ENCODE measurements at regions of chr7 and their contacts with region 1.

Region 1: GRCh38 chr7:130904031-130904757 is 170.2 kb upstream of the KLF14 start:
- DNase-seq: peak; percentile 96
- H3K4me3 Mint-ChIP-seq: peak overlapping the region; percentile 59
- H3K27ac Mint-ChIP-seq: peak overlapping the region; percentile 97
- H3K4me1 Mint-ChIP-seq: peaks cover 66% of the 10 kb centered on the region
- H3K27me3 Mint-ChIP-seq: no peaks in the 10 kb centered on the region
- CTCF ChIP-seq: no peak

Region 2: GRCh38 chr7:130853503-130854279 is 50.5 kb before region 1 on chr7:
- CTCF ChIA-PET with region 1: interaction called, 4 read pairs
- POLR2A ChIA-PET with region 1: interaction called, 12 read pairs
- intact Hi-C with region 1: no loop called
- DNase-seq: peak; percentile 84
- H3K4me3 Mint-ChIP-seq: peak overlapping the region; percentile 29
- H3K27ac Mint-ChIP-seq: peak overlapping the region; percentile 24
- H3K4me1 Mint-ChIP-seq: peaks cover 31% of the 10 kb centered on the region
- H3K27me3 Mint-ChIP-seq: no peaks in the 10 kb centered on the region
- CTCF ChIP-seq: no peak

Region 3: GRCh38 chr7:130929896-130930659 is 25.9 kb after region 1 on chr7:
- CTCF ChIA-PET with region 1: interaction called, 123 read pairs
- POLR2A ChIA-PET with region 1: interaction called, 11 read pairs
- intact Hi-C with region 1: no loop called
- DNase-seq: no peak
- H3K4me3 Mint-ChIP-seq: no peak overlapping the region
- H3K27ac Mint-ChIP-seq: peak overlapping the region; percentile 79
- H3K4me1 Mint-ChIP-seq: peaks cover 33% of the 10 kb centered on the region
- H3K27me3 Mint-ChIP-seq: no peaks in the 10 kb centered on the region
- CTCF ChIP-seq: no peak

Region 4: DNA sequence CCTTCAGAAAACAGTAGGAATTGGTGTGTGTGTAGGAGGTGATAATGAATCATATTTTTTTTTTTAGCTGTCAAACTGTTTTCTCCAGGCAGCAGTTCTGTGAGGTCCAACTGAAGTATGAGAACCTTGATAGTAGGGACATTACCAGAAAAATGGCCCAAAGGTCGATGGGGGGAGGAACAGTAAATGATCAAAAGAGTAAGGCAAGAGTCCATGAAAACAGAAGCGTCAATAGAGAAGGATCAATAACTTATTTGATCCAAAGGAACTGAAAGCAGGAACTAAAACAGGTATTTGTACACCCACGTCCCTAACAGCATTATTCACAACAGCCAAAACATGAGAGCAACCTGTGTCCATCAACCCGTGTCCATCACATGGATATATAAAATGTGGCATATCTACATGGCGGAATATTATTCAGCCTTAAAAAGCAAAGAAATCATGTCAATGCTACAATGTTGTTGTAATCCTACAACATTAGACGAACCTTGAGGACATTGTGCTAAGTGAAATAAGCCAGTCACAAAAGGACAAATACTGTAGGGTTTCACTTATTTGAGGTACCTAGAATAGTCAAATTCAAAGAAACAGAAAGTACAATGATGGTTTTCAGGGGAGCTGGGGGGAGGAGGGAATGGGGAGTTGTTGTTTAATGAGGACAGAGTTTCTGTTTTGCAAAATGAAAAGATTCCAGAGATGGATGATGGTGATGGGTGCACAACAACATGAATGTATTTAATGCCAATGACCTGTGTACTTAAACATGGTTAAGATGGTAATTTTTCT is 43.8 kb after region 1 on chr7:
- CTCF ChIA-PET with region 1: interaction called, 3 read pairs
- POLR2A ChIA-PET with region 1: interaction called, 35 read pairs
- intact Hi-C with region 1: no loop called
- DNase-seq: no peak
- H3K4me3 Mint-ChIP-seq: no peak overlapping the region
- H3K27ac Mint-ChIP-seq: no peak overlapping the region
- H3K4me1 Mint-ChIP-seq: peaks cover 41% of the 10 kb centered on the region
- H3K27me3 Mint-ChIP-seq: no peaks in the 10 kb centered on the region
- CTCF ChIP-seq: no peak

Region 5: GRCh38 chr7:131007394-131008330 is 103.5 kb after region 1 on chr7:
- CTCF ChIA-PET with region 1: interaction called, 5 read pairs
- POLR2A ChIA-PET with region 1: interaction called, 38 read pairs
- intact Hi-C with region 1: no loop called
- DNase-seq: peak; percentile 87
- H3K4me3 Mint-ChIP-seq: peak overlapping the region; percentile 15
- H3K27ac Mint-ChIP-seq: peak overlapping the region; percentile 84
- H3K4me1 Mint-ChIP-seq: peaks cover 46% of the 10 kb centered on the region
- H3K27me3 Mint-ChIP-seq: no peaks in the 10 kb centered on the region
- CTCF ChIP-seq: peak; percentile 58

Measured in MCF 10A (cell line).